ENCODE measurements at regions of chr12 and their contacts with region 1.

Region 1: GRCh38 chr12:53159195-53159839 is 21.2 kb upstream of the ZNF740 start:
- DNase-seq: peak in 1 of 2 experiments; percentile 97
- H3K4me3 ChIP-seq: peak overlapping the region in 1 of 4 experiments; percentile 45; a peak in 3 of 8 replicates
- H3K27ac ChIP-seq: no peak overlapping the region
- H3K4me1 ChIP-seq: peaks cover 0 to 3% (median 1%) of the 10 kb centered on the region in 4 experiments; a peak in 2 of 7 replicates
- H3K27me3 ChIP-seq: peaks cover 0 to 13% (median 7%) of the 10 kb centered on the region in 4 experiments; a peak in 5 of 7 replicates
- CTCF ChIP-seq: peak; percentile 96 to 100 (median 100)
- EP300 ChIP-seq: no peak
- POLR2A ChIP-seq: no peak
- RAD21 ChIP-seq: peak; percentile 81 to 87

Region 2: GRCh38 chr12:52951640-52952431 is 207.5 kb before region 1 on chr12:
- CTCF ChIA-PET with region 1: no interaction called
- POLR2A ChIA-PET with region 1: no interaction called
- DNase-seq: no peak
- H3K4me3 ChIP-seq: no peak overlapping the region
- H3K27ac ChIP-seq: no peak overlapping the region
- H3K4me1 ChIP-seq: peaks cover 6 to 19% (median 11%) of the 10 kb centered on the region in 4 experiments
- H3K27me3 ChIP-seq: no peaks in the 10 kb centered on the region
- CTCF ChIP-seq: peak in 1 of 3 experiments; percentile 40; a peak in 1 of 4 replicates
- EP300 ChIP-seq: no peak
- POLR2A ChIP-seq: no peak
- RAD21 ChIP-seq: peak in 1 of 2 experiments; percentile 38; a peak in 3 of 4 replicates

Region 3: GRCh38 chr12:53005986-53006809 is 153.1 kb before region 1 on chr12 and contains the start of gene EIF4B:
- CTCF ChIA-PET with region 1: no interaction called
- POLR2A ChIA-PET with region 1: no interaction called
- DNase-seq: peak; percentile 97 to 100
- H3K4me3 ChIP-seq: peak within 1 kb of the TSS; percentile 73 to 93 (median 88)
- H3K27ac ChIP-seq: peak within 1 kb of the TSS; percentile 98
- H3K4me1 ChIP-seq: peaks cover 0 to 12% (median 6%) of the 10 kb centered on the region in 4 experiments; a peak in 4 of 7 replicates
- H3K27me3 ChIP-seq: no peaks in the 10 kb centered on the region
- CTCF ChIP-seq: peak in 1 of 3 experiments; percentile 1; a peak in 1 of 4 replicates
- EP300 ChIP-seq: no peak
- POLR2A ChIP-seq: peak; percentile 58 to 95
- RAD21 ChIP-seq: no peak
- total RNA-seq, gene EIF4B: 811 and 816 TPM in 2 replicates

Region 4: DNA sequence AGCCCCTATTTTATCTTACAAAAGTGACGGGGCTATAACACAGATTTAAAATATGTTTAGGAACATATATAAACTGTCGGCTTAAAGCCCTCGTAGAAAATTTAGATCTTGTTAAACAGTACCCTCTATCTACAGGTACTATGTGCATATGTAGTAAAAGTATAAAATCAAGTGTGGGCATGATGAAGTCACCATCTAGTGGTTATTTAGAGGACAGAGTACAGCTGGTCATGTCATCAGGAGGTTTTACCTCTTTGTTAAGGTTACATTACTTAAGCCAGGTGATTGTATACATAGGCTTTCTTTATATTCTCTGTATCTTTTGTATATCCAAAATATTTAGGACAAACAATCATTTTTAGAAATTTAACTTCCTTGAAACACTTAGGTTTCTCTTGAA is 127.7 kb before region 1 on chr12:
- CTCF ChIA-PET with region 1: no interaction called
- POLR2A ChIA-PET with region 1: no interaction called
- DNase-seq: no peak
- H3K4me3 ChIP-seq: no peak overlapping the region
- H3K27ac ChIP-seq: no peak overlapping the region
- H3K4me1 ChIP-seq: no peaks in the 10 kb centered on the region
- H3K27me3 ChIP-seq: no peaks in the 10 kb centered on the region
- CTCF ChIP-seq: no peak
- EP300 ChIP-seq: no peak
- POLR2A ChIP-seq: no peak
- RAD21 ChIP-seq: no peak

Region 5: GRCh38 chr12:53047221-53048042 is 111.9 kb before region 1 on chr12:
- CTCF ChIA-PET with region 1: interaction called, 11 read pairs
- POLR2A ChIA-PET with region 1: no interaction called
- DNase-seq: peak in 1 of 2 experiments; percentile 83
- H3K4me3 ChIP-seq: peak overlapping the region; percentile 34 to 94 (median 50); a peak in 6 of 8 replicates
- H3K27ac ChIP-seq: no peak overlapping the region
- H3K4me1 ChIP-seq: peaks cover 29 to 75% (median 53%) of the 10 kb centered on the region in 4 experiments
- H3K27me3 ChIP-seq: peaks cover 0 to 20% (median 17%) of the 10 kb centered on the region in 4 experiments; a peak in 6 of 7 replicates
- CTCF ChIP-seq: peak in 2 of 3 experiments; percentile 20 to 48; a peak in 3 of 4 replicates
- EP300 ChIP-seq: no peak
- POLR2A ChIP-seq: no peak
- RAD21 ChIP-seq: 0 out of 4 replicates have a peak, but pooled peaks of 1 of the 2 experiments have one; percentile 6

Region 6: GRCh38 chr12:53098982-53099651 is 60.2 kb before region 1 on chr12:
- CTCF ChIA-PET with region 1: interaction called, 84 read pairs
- POLR2A ChIA-PET with region 1: no interaction called
- DNase-seq: peak; percentile 65 to 97
- H3K4me3 ChIP-seq: peak overlapping the region in 2 of 4 experiments; percentile 5 to 85; a peak in 3 of 8 replicates
- H3K27ac ChIP-seq: no peak overlapping the region
- H3K4me1 ChIP-seq: peaks cover 4 to 21% (median 7%) of the 10 kb centered on the region in 4 experiments
- H3K27me3 ChIP-seq: peaks cover 0 to 25% (median 15%) of the 10 kb centered on the region in 4 experiments; a peak in 5 of 7 replicates
- CTCF ChIP-seq: peak; percentile 82 to 87 (median 86)
- EP300 ChIP-seq: no peak
- POLR2A ChIP-seq: no peak
- RAD21 ChIP-seq: peak; percentile 79 to 81

Region 7: GRCh38 chr12:53145383-53146260 is 13.7 kb before region 1 on chr12:
- CTCF ChIA-PET with region 1: interaction called, 14 read pairs
- POLR2A ChIA-PET with region 1: interaction called, 4 read pairs
- DNase-seq: no peak
- H3K4me3 ChIP-seq: no peak overlapping the region
- H3K27ac ChIP-seq: no peak overlapping the region
- H3K4me1 ChIP-seq: peaks cover 0 to 2% (median 0%) of the 10 kb centered on the region in 4 experiments; a peak in 2 of 7 replicates
- H3K27me3 ChIP-seq: no peaks in the 10 kb centered on the region
- CTCF ChIP-seq: no peak
- EP300 ChIP-seq: no peak
- POLR2A ChIP-seq: no peak
- RAD21 ChIP-seq: no peak

Region 8: DNA sequence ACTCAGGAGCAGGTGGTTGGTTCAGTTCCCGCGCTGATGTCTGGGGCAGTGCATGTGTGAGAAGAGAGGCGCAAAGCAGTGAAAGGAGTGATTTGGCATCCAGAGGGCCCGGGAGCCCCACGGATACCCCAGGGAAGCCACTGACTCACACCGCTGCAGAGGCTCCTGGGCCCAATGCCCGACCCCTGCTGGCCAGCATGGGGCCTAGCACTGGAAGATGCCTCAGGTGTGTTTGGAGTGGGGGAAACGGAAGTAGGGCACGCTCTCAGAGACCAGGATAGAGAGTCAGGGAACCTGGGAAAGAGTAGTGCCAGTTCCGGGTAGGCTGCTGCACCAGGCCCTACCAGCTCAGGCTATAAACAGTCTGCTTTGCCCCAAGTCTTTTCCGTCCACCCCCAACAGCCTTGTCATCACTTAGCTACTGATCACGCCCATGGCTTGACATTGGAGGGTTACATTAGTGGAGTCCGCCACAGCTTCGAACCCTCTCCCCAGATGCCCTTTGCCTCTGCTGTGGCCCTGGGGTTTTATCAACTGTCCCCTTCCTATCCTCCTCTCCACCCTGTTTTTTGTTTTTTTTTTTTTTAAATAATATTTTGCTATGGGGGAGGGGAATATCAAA is 30.9 kb after region 1 on chr12:
- CTCF ChIA-PET with region 1: interaction called, 101 read pairs
- POLR2A ChIA-PET with region 1: interaction called, 7 read pairs
- DNase-seq: peak in 1 of 2 experiments; percentile 81
- H3K4me3 ChIP-seq: no peak overlapping the region
- H3K27ac ChIP-seq: no peak overlapping the region
- H3K4me1 ChIP-seq: peaks cover 0 to 6% (median 3%) of the 10 kb centered on the region in 4 experiments; a peak in 4 of 7 replicates
- H3K27me3 ChIP-seq: peaks cover 0 to 8% (median 3%) of the 10 kb centered on the region in 4 experiments; a peak in 4 of 7 replicates
- CTCF ChIP-seq: peak; percentile 86 to 97 (median 89)
- EP300 ChIP-seq: no peak
- POLR2A ChIP-seq: no peak
- RAD21 ChIP-seq: peak; percentile 63 to 75

Region 9: GRCh38 chr12:53213348-53213747 is 54.0 kb after region 1 on chr12:
- CTCF ChIA-PET with region 1: interaction called, 48 read pairs
- POLR2A ChIA-PET with region 1: no interaction called
- DNase-seq: peak in 1 of 2 experiments; percentile 96
- H3K4me3 ChIP-seq: no peak overlapping the region
- H3K27ac ChIP-seq: no peak overlapping the region
- H3K4me1 ChIP-seq: peaks cover 21 to 45% (median 35%) of the 10 kb centered on the region in 4 experiments
- H3K27me3 ChIP-seq: no peaks in the 10 kb centered on the region
- CTCF ChIP-seq: peak in 2 of 3 experiments; percentile 96 to 97; a peak in 3 of 4 replicates
- EP300 ChIP-seq: no peak
- POLR2A ChIP-seq: no peak
- RAD21 ChIP-seq: peak; percentile 98

Region 10: GRCh38 chr12:53287741-53288216 is 128.5 kb after region 1 on chr12:
- CTCF ChIA-PET with region 1: interaction called, 22 read pairs
- POLR2A ChIA-PET with region 1: no interaction called
- DNase-seq: peak in 1 of 2 experiments; percentile 81
- H3K4me3 ChIP-seq: no peak overlapping the region
- H3K27ac ChIP-seq: no peak overlapping the region
- H3K4me1 ChIP-seq: no peaks in the 10 kb centered on the region
- H3K27me3 ChIP-seq: no peaks in the 10 kb centered on the region
- CTCF ChIP-seq: peak; percentile 80 to 86 (median 85)
- EP300 ChIP-seq: no peak
- POLR2A ChIP-seq: no peak
- RAD21 ChIP-seq: peak; percentile 74 to 81

Measured in H1 (cell line).